ENCODE measurements at regions of chr7 and their contacts with region 1.

Region 1: GRCh38 chr7:44123190-44124003 is at the start of gene POLD2:
- DNase-seq: peak; percentile 97
- H3K4me3 ChIP-seq: peak within 1 kb of the TSS; percentile 87
- H3K27ac ChIP-seq: peak within 1 kb of the TSS; percentile 43
- H3K4me1 ChIP-seq: peaks cover 41% of the 10 kb centered on the region
- CTCF ChIP-seq: no peak
- total RNA-seq, gene POLD2: 205 and 230 TPM in 2 replicates

Region 2: GRCh38 chr7:44097064-44097932 is 26.1 kb before region 1 on chr7:
- CTCF ChIA-PET with region 1: interaction called, 3 read pairs
- POLR2A ChIA-PET with region 1: interaction called, 18 read pairs
- intact Hi-C with region 1: loop called (anchors 2 kb)
- DNase-seq: peak; percentile 98
- H3K4me3 ChIP-seq: peak overlapping the region; percentile 35
- H3K27ac ChIP-seq: peak overlapping the region; percentile 98
- H3K4me1 ChIP-seq: peaks cover 100% of the 10 kb centered on the region
- CTCF ChIP-seq: peak; percentile 58

Region 3: DNA sequence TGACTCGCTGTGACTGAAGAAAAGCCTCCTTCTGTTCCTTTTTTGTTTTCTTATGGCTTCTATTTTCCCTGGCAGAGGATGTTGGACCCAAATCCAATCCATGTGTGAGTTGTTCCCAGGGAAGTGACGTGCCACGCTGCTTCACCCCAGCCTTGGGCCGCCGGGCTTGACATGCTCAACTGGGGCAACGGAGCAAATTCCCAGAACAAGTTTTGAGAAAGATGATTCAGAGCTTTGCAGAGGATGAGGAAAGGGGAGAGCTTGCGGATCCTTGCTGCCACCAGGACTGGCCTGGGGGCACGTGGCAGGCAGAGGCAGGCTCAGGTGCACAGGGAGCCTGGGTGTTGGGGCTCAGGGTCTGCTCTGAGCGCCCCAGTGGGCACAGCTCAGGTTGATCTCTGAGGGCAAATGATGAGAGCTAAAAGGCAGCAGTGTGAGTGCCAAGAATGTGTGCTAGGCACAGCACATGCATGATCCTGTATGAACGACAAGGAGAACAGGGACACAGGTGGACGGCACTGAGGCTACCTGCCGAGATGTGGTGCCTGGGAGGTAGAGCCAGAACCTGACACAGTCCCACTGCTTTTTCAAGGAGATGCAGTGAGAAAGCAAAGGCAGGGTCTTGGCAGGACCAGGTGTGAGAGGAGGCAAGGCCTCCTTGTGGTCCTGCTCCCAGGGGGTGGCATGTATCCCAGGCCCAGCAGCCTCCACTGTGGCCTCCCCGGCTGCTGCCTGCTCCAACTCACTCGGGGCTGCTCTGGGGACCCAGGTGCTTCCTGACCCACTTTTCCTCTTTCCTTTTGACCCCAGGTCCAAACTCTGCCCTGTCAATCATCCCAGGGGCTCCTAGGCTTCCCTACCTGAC is 20.9 kb before region 1 on chr7:
- CTCF ChIA-PET with region 1: interaction called, 3 read pairs
- POLR2A ChIA-PET with region 1: interaction called, 18 read pairs
- intact Hi-C with region 1: loop called (anchors 2 kb)
- DNase-seq: no peak
- H3K4me3 ChIP-seq: peak overlapping the region; percentile 53
- H3K27ac ChIP-seq: peak overlapping the region; percentile 98
- H3K4me1 ChIP-seq: peaks cover 85% of the 10 kb centered on the region
- CTCF ChIP-seq: no peak